GM10248 (cell line): ENCODE measurements at regions of chr3 and their contacts with region 1.

Region 1: GRCh38 chr3:111521891-111522290 is 20.1 kb upstream of the CD96 start:
- DNase-seq: no peak
- CTCF ChIP-seq: no peak

Region 2: DNA sequence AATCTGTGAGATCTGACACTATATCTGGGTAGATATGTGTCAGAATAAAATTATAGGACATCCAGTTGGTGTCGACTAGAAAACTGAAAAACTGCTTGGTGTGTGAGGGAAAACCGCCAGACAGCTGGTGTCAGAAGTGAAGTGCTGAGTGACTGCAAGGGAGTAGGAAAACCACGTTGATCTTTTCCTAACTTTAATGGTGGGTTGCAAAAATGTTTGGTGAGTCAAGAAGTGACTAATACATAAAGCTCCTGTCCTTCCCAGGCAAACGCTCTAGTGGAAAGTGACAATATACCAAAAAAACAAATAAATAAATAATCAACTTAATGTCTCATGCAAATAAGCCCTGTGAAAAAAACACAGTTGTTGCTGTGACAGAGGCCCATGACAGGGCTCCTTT is 12.8 kb after region 1 on chr3:
- CTCF ChIA-PET with region 1: interaction called, 20 read pairs
- POLR2A ChIA-PET with region 1: no interaction called
- DNase-seq: no peak
- CTCF ChIP-seq: no peak